K562 (cell line): ENCODE measurements at regions of chr12 and their contacts with region 1.

Region 1: DNA sequence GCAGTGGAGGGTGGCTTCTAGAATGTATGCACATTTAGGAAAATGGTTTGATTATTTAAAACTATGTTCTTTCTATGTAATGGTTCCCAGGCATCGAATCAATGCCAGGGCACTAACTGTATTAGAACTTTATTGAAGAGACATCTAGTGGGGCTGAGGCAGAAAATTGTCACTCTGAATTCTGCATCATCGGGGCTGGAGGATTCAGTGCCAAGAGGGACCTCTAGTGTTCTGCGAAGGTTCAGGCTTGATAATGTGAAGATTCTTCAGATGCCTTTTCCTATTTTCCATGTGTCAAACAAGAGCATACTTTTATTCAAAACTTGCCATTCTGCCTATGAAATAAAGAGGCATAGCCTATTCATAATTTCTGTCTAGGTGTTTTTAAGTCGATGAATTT is 146.3 kb downstream of the CAND1 start:
- DNase-seq: peak in 2 of 4 experiments; percentile 21 to 25
- ATAC-seq: peak; percentile 71
- H3K4me3 ChIP-seq: no peak overlapping the region
- H3K27ac ChIP-seq: no peak overlapping the region
- H3K4me1 ChIP-seq: no peaks in the 10 kb centered on the region
- H3K27me3 ChIP-seq: 0 out of 5 replicates have a peak, but pooled peaks cover 0 to 2% of the 10 kb centered on the region in 2 experiments
- CTCF ChIP-seq: peak; percentile 41 to 68 (median 56); a peak in 5 of 6 replicates
- EP300 ChIP-seq: no peak
- POLR2A ChIP-seq: no peak
- RAD21 ChIP-seq: peak; percentile 20 to 59; a peak in 2 of 4 replicates

Region 2: DNA sequence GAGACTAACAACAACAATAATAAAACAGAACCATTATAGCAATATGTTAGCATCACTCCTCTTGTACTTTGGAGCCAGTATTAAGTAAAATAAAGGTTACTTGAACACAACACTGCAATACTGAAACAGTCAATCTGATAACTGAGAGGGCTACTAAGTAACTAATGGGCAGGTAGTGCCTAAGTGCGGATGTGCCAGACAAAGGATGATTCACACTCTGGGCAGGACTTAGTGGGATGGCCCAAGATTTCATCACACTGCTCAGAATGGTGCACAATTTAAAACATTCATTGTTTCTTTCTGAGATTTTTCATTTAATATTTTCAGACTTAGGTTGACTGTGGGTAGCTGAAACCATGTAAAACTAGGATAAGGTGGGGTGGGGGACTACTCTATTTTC is 278.2 kb before region 1 on chr12:
- CTCF ChIA-PET with region 1: no interaction called
- POLR2A ChIA-PET with region 1: no interaction called
- in situ Hi-C with region 1: no loop called
- intact Hi-C with region 1: no loop called
- DNase-seq: no peak
- ATAC-seq: no peak
- H3K4me3 ChIP-seq: no peak overlapping the region
- H3K27ac ChIP-seq: no peak overlapping the region
- H3K4me1 ChIP-seq: no peaks in the 10 kb centered on the region
- H3K27me3 ChIP-seq: no peaks in the 10 kb centered on the region
- CTCF ChIP-seq: no peak
- EP300 ChIP-seq: no peak
- POLR2A ChIP-seq: no peak
- RAD21 ChIP-seq: no peak

Region 3: GRCh38 chr12:67161322-67161918 is 254.1 kb before region 1 on chr12:
- CTCF ChIA-PET with region 1: no interaction called
- POLR2A ChIA-PET with region 1: no interaction called
- in situ Hi-C with region 1: no loop called
- intact Hi-C with region 1: loop called (anchors 5 kb)
- DNase-seq: peak; percentile 18 to 44 (median 21)
- ATAC-seq: peak; percentile 77
- H3K4me3 ChIP-seq: no peak overlapping the region
- H3K27ac ChIP-seq: no peak overlapping the region
- H3K4me1 ChIP-seq: no peaks in the 10 kb centered on the region
- H3K27me3 ChIP-seq: no peaks in the 10 kb centered on the region
- CTCF ChIP-seq: peak; percentile 32 to 58 (median 51); a peak in 5 of 6 replicates
- EP300 ChIP-seq: no peak
- POLR2A ChIP-seq: no peak
- RAD21 ChIP-seq: peak in 1 of 2 experiments; percentile 35; a peak in 3 of 4 replicates